Prostate gland (tissue), 2 donors: ENCODE measurements at regions of chr22 and their contacts with region 1.

Region 1: DNA sequence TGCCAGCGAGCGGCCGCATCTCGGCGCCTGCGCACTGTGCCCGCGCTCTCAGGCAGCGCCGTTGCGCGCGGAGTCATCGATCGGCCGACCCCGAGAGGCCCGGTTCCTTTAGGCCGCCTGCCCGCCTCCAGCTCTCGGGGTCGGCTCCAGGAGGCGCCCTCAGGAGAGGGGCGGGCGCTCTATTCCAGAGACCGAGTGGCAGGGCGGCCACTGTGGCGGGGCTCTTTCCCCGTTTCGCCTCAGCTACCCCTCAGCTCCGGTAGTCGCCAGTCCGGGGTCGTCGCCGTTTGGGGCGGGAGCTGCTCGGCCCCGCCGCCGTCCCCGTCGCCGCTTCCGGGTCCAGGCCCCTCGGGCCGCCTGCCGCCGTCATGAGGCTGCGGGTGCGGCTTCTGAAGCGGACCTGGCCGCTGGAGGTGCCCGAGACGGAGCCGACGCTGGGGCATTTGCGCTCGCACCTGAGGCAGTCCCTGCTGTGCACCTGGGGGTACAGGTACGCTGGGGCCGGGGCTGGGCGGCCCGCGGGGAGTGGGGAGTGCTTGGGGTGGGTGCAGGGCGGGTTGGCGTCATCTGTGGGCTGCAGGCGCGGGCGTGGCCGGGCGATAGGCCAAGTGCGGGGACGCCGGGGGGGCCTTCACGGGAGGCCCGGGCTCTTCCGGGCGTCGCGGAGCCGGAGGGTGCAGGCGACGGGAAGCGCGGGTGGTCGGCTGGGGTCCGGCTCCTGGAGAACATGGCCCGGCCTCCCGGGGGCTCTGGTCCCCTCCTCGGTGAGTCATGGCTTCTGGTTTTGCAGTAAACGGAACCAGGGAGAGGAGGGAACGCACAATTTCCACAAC is at the start of gene FBXO7:
- DNase-seq: peak; percentile 86
- H3K4me3 ChIP-seq: peak within 1 kb of the TSS; percentile 96 to 99
- H3K27ac ChIP-seq: peak within 1 kb of the TSS; percentile 99
- H3K4me1 ChIP-seq: peaks cover 7% of the 10 kb centered on the region
- H3K27me3 ChIP-seq: no peaks in the 10 kb centered on the region
- CTCF ChIP-seq: peak in 3 of 4 experiments; percentile 38 to 66 (median 39)
- POLR2A ChIP-seq: peak; percentile 62
- total RNA-seq, gene FBXO7: 82.8 to 128 TPM

Region 2: GRCh38 chr22:31970490-31971444 is 504.1 kb before region 1 on chr22:
- intact Hi-C with region 1: loop called (anchors 10 kb)
- DNase-seq: peak; percentile 78
- H3K4me3 ChIP-seq: peak overlapping the region; percentile 17 to 33
- H3K27ac ChIP-seq: no peak overlapping the region
- H3K4me1 ChIP-seq: no peaks in the 10 kb centered on the region
- H3K27me3 ChIP-seq: no peaks in the 10 kb centered on the region
- CTCF ChIP-seq: peak; percentile 78 to 92 (median 84)
- POLR2A ChIP-seq: peak; percentile 7

Region 3: GRCh38 chr22:32411829-32412592 is 62.8 kb before region 1 on chr22 and contains the start of gene RTCB:
- intact Hi-C with region 1: loop called (anchors 5 kb)
- DNase-seq: peak; percentile 80
- H3K4me3 ChIP-seq: peak within 1 kb of the TSS; percentile 64 to 75
- H3K27ac ChIP-seq: peak within 1 kb of the TSS; percentile 33 to 58
- H3K4me1 ChIP-seq: peaks cover 2% of the 10 kb centered on the region
- H3K27me3 ChIP-seq: no peaks in the 10 kb centered on the region
- CTCF ChIP-seq: peak in 2 of 4 experiments; percentile 9 to 18
- POLR2A ChIP-seq: peak; percentile 45
- total RNA-seq, gene RTCB: 52.1 to 87.5 TPM